ENCODE measurements at regions of chr10 and their contacts with region 1.

Region 1: GRCh38 chr10:22340362-22341189 is 4.7 kb upstream of the SPAG6 start:
- DNase-seq: peak; percentile 82
- H3K4me3 ChIP-seq: peak overlapping the region; percentile 53 to 84 (median 72)
- H3K27ac ChIP-seq: peak overlapping the region; percentile 91 to 98 (median 96)
- H3K4me1 ChIP-seq: peaks cover 0 to 35% (median 30%) of the 10 kb centered on the region in 4 donors
- H3K27me3 ChIP-seq: peaks cover 75 to 89% (median 79%) of the 10 kb centered on the region in 3 donors
- CTCF ChIP-seq: no peak
- EP300 ChIP-seq: no peak
- POLR2A ChIP-seq: peak; percentile 34 to 37

Region 2: DNA sequence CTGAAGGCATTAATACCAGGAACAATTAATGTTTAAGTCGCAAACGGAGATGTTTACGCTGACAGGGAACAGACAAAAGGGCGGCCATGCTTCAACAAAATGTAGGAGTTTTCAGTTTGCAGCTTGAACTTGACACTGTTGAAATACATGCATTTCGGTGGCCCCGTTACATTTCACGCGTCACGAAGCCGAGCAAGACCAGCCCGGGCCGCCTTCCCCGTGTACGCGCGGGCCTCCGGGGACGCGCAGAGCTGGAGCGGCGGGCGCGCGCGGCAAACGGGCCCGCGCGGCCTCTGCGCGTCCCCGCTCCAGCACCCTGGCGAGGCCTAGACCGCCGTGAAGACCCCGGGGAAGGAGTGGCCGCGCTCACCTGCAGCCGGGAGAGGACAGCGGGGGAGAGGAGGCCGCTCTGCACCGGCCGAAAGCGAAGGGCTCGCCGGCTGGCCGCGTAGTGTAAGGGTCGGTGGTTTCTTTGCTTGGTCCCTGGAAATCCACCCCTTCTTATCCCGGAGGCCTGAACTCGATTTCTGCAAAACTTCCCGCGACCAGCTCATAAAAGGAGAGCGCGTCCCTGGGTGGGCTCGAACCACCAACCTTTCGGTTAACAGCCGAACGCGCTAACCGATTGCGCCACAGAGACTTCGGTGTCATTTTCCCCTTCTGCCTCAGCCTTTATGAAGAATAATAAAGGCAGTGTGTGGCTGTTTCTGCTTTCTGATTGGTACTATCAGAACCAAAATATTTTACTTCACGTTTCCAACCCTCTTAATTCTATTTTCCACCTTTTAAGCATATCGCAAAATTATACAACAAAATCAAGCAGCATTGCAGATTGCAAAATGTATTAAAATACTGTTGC is 111.4 kb before region 1 on chr10:
- intact Hi-C with region 1: loop called (anchors 1 kb)
- DNase-seq: peak; percentile 93
- H3K4me3 ChIP-seq: peak overlapping the region; percentile 60 to 79 (median 75)
- H3K27ac ChIP-seq: peak overlapping the region; percentile 93 to 96 (median 96)
- H3K4me1 ChIP-seq: peaks cover 0 to 12% (median 7%) of the 10 kb centered on the region in 4 donors
- H3K27me3 ChIP-seq: no peaks in the 10 kb centered on the region
- CTCF ChIP-seq: no peak
- EP300 ChIP-seq: no peak
- POLR2A ChIP-seq: no peak

Region 3: GRCh38 chr10:22316285-22317120 is 24.1 kb before region 1 on chr10 and contains the start of gene COMMD3:
- intact Hi-C with region 1: loop called (anchors 1 kb)
- DNase-seq: peak; percentile 96
- H3K4me3 ChIP-seq: peak within 1 kb of the TSS; percentile 69 to 87 (median 78)
- H3K27ac ChIP-seq: peak within 1 kb of the TSS; percentile 94 to 96 (median 96)
- H3K4me1 ChIP-seq: peaks cover 0 to 38% (median 24%) of the 10 kb centered on the region in 4 donors
- H3K27me3 ChIP-seq: no peaks in the 10 kb centered on the region
- CTCF ChIP-seq: no peak
- EP300 ChIP-seq: no peak
- POLR2A ChIP-seq: peak; percentile 52 to 66
- total RNA-seq, gene COMMD3: 45.3 to 80.1 (median 61.6) TPM

Region 4: DNA sequence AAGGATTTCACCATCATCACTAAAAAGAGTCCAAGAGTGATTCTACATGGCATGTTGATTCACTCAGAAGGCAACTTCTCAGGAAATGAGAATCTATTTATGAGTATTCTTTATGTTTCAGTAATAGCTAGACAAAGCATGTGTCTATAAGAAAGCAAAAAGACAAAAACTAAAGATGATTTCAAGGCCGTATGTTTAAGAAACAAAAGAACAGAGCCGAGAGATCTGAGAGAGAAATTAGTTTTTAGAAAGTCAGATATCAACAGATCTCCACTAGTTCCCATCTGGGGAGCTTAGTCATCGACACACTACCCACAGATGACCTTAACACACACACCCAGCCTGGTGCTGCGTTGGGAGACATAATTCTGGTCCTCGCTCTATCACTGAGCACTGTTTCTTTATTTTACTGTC is 352.8 kb after region 1 on chr10:
- intact Hi-C with region 1: no loop called
- DNase-seq: no peak
- H3K4me3 ChIP-seq: no peak overlapping the region
- H3K27ac ChIP-seq: no peak overlapping the region
- H3K4me1 ChIP-seq: peaks cover 0 to 32% (median 23%) of the 10 kb centered on the region in 4 donors
- H3K27me3 ChIP-seq: no peaks in the 10 kb centered on the region
- CTCF ChIP-seq: no peak
- EP300 ChIP-seq: no peak
- POLR2A ChIP-seq: no peak

Region 5: GRCh38 chr10:22988581-22989360 is 648.2 kb after region 1 on chr10:
- intact Hi-C with region 1: loop called (anchors 10 kb)
- DNase-seq: peak; percentile 73
- H3K4me3 ChIP-seq: no peak overlapping the region
- H3K27ac ChIP-seq: no peak overlapping the region
- H3K4me1 ChIP-seq: peaks cover 0 to 11% (median 4%) of the 10 kb centered on the region in 4 donors
- H3K27me3 ChIP-seq: no peaks in the 10 kb centered on the region
- CTCF ChIP-seq: peak; percentile 78 to 89 (median 85)
- EP300 ChIP-seq: no peak
- POLR2A ChIP-seq: no peak

Region 6: GRCh38 chr10:23604613-23605012 is 1264.0 kb after region 1 on chr10:
- intact Hi-C with region 1: no loop called
- DNase-seq: no peak
- H3K4me3 ChIP-seq: no peak overlapping the region
- H3K27ac ChIP-seq: no peak overlapping the region
- H3K4me1 ChIP-seq: no peaks in the 10 kb centered on the region
- H3K27me3 ChIP-seq: no peaks in the 10 kb centered on the region
- CTCF ChIP-seq: no peak
- EP300 ChIP-seq: no peak
- POLR2A ChIP-seq: no peak